HepG2 (cell line): ENCODE measurements at regions of chr18 and their contacts with region 1.

Region 1: DNA sequence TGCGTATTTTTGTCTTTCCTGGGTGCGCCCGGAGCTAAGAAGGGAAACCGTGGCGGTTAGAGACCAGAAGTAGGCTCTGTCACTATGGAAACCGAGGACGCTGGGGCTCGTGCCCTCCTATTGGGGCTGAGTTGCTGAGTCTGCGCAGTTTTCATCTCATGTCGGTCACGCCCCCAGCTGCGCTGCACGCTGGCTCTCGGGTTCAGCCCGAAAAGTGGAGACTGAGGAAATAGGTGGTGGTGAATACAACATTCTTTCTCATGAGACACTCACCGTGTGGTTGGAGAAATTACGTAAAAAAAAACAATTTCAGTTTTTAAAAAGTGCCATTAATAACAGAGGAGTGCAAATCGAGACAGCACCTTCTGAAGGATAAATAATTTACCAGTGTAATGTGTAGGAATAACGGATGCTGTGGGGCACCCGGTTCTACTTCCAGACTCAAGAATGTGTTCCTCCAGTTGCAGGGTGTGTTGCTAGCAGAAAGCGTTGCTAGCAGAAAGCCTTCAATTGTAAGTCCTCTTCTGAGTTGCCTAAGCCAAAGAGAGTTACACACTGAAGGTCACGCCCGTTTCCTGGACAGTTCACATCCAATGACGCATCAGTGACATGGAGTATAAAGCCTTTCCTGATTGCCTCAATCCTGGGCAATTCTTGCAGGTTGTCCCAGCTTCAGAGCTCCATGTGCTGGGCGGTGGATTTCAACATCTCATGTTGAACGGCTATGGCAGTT is 20.4 kb upstream of the CXXC1 start:
- DNase-seq: peak; percentile 85
- ATAC-seq: peak; percentile 98
- H3K4me3 ChIP-seq: peak overlapping the region; percentile 46 to 75 (median 71)
- H3K27ac ChIP-seq: no peak overlapping the region
- H3K4me1 ChIP-seq: peaks cover 37% of the 10 kb centered on the region
- H3K27me3 ChIP-seq: no peaks in the 10 kb centered on the region
- CTCF ChIP-seq: no peak
- EP300 ChIP-seq: no peak
- POLR2A ChIP-seq: no peak
- RAD21 ChIP-seq: no peak

Region 2: DNA sequence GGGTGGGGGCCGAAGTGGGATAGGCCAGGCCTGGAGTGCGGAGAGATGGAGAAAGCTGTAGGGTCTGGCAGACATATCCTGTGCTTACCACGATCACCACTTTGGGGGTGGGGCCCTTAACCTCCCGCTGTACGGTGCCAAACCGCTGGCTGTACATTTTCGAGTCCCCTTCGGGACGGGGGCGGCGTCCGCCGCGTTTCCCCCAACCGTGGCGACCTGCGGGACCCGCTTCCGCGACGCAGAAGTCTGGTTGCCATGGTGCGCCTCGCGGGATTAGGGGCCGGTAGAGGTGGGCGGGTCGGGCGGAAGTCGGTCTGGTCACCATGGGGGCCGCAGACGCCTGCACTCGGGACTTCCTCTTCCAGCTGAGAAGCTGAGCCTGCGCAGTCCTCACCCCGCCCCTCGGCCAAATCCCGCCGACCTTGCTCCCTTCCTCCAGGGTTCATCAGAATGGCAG is 41.6 kb before region 1 on chr18 and contains the start of gene CFAP53:
- CTCF ChIA-PET with region 1: no interaction called
- POLR2A ChIA-PET with region 1: no interaction called
- in situ Hi-C with region 1: no loop called
- intact Hi-C with region 1: loop called (anchors 2 kb)
- DNase-seq: peak; percentile 81
- ATAC-seq: peak; percentile 99
- H3K4me3 ChIP-seq: peak within 1 kb of the TSS; percentile 74 to 85 (median 78)
- H3K27ac ChIP-seq: no peak within 1 kb of the TSS
- H3K4me1 ChIP-seq: peaks cover 13% of the 10 kb centered on the region
- H3K27me3 ChIP-seq: no peaks in the 10 kb centered on the region; a peak in 1 of 5 replicates
- CTCF ChIP-seq: no peak
- EP300 ChIP-seq: no peak
- POLR2A ChIP-seq: peak in 1 of 2 experiments; percentile 29; a peak in 2 of 4 replicates
- RAD21 ChIP-seq: 0 out of 2 replicates have a peak, but pooled peaks have one; percentile 13
- total RNA-seq, gene CFAP53: 0.07 TPM in 1 of 2 replicates, not detected in the other

Region 3: GRCh38 chr18:50281295-50281971 is 26.5 kb before region 1 on chr18 and contains the start of gene MBD1:
- CTCF ChIA-PET with region 1: no interaction called
- POLR2A ChIA-PET with region 1: interaction called, 15 read pairs
- in situ Hi-C with region 1: no loop called
- intact Hi-C with region 1: no loop called
- DNase-seq: peak; percentile 93
- ATAC-seq: peak; percentile 96
- H3K4me3 ChIP-seq: peak within 1 kb of the TSS; percentile 83 to 100 (median 88)
- H3K27ac ChIP-seq: peak within 1 kb of the TSS; percentile 70
- H3K4me1 ChIP-seq: peaks cover 29% of the 10 kb centered on the region
- H3K27me3 ChIP-seq: no peaks in the 10 kb centered on the region; a peak in 1 of 5 replicates
- CTCF ChIP-seq: peak; percentile 66
- EP300 ChIP-seq: no peak
- POLR2A ChIP-seq: peak in 1 of 2 experiments; percentile 71; a peak in 2 of 4 replicates
- RAD21 ChIP-seq: 0 out of 2 replicates have a peak, but pooled peaks have one; percentile 16
- total RNA-seq, gene MBD1: 15.2 and 25.5 TPM in 2 replicates

Region 4: DNA sequence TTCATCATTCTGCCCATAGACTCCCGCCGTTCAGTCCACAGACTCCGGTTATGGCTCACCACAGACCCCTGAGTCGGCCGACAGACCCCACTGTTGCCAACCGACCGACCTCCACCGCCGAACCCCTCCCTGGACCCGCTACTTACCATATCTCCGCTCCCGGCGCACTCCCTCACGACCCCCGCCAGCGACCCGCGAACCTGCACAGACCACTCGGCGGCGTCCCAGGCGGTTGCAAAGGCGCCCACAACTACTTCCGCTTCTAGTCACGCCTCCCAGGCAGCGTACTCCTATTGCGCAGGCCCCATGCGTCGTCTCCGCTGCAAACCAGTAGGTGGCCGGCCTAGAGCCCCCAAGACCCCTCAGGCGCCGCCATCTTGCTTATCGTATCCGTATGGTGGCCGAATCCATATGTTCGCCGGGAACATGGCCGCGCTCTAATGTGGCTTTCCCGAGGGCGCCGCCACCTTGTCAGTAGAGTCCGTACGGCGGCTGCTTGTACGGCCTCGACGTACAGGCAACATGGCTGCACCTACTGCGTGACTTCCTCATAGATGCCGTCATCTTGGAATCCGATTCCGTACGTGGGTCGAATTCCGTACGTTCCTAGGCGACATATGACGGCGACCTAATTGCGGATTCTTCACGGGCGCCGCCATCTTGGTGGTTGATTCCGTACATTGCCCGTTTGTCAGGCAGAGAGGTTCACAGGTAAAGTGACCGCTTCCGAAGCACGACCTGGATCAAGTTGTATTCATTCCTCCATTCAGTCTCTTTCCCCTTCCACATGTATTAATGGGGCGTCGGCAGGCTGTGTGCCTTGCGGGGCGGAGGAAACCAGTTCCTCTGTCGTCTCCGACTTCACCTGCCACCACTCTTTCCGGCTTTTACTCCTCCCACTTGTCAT is 20.2 kb before region 1 on chr18 and contains the start of gene CXXC1:
- CTCF ChIA-PET with region 1: no interaction called
- POLR2A ChIA-PET with region 1: interaction called, 4 read pairs
- in situ Hi-C with region 1: no loop called
- intact Hi-C with region 1: loop called (anchors 2 kb)
- DNase-seq: peak; percentile 98
- ATAC-seq: peak; percentile 96
- H3K4me3 ChIP-seq: peak within 1 kb of the TSS; percentile 88 to 93 (median 90)
- H3K27ac ChIP-seq: peak within 1 kb of the TSS; percentile 59
- H3K4me1 ChIP-seq: peaks cover 16% of the 10 kb centered on the region
- H3K27me3 ChIP-seq: peaks cover 0 to 4% of the 10 kb centered on the region in 2 experiments; a peak in 2 of 5 replicates
- CTCF ChIP-seq: peak; percentile 78
- EP300 ChIP-seq: no peak; a peak in 1 of 4 replicates
- POLR2A ChIP-seq: peak in 1 of 2 experiments; percentile 41; a peak in 2 of 4 replicates
- RAD21 ChIP-seq: peak; percentile 29; the same call in 1 of the 2 replicates
- total RNA-seq, gene CXXC1: 29.8 and 32.9 TPM in 2 replicates

Region 5: DNA sequence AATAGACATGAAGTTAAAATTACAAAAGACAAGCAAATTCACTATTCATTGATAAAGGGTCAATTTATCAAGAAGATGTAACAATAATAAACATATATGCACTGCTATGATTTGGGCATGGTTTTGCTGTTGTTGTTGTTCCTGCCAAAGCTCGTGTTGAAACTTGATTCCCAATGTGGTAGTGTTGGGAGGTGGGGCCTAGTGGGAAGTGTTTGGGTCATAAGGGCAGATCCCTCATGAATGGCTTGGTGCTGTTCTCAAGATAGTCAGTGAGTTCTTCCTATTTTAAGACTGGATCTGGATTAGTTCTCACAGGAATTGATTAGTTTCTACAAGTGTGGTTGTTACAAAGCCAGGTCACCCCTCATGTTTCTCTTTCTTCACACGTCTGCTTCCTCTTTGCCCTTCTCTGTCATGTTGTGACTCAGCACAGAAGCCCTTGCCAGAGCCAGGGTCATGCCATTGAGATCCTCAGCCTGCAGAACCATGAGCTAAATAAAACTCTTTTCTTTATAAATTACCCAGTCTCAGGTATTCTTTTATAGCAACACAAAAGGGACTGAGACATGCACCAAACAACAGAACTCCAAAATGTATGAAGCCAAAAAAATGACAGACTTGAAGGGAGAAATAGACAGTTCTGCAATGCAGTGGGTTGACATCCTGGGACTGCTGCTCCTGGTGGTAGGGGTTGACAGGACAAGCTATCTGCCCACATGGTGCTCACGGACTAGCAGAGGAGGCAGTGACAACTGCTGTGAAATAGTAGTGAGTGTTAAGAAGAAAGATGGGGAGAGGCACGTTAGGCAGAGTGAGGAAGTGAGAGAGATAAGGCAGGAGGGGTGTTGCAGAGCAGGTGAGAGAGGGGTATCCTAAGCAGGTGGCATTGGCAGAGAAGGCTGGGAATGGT is 48.4 kb after region 1 on chr18:
- CTCF ChIA-PET with region 1: no interaction called
- POLR2A ChIA-PET with region 1: no interaction called
- in situ Hi-C with region 1: no loop called
- intact Hi-C with region 1: loop called (anchors 5 kb)
- DNase-seq: peak; percentile 11
- ATAC-seq: peak; percentile 97
- H3K4me3 ChIP-seq: no peak overlapping the region
- H3K27ac ChIP-seq: no peak overlapping the region
- H3K4me1 ChIP-seq: peaks cover 15% of the 10 kb centered on the region
- H3K27me3 ChIP-seq: peaks cover 2 to 4% of the 10 kb centered on the region in 2 experiments; a peak in 3 of 5 replicates
- CTCF ChIP-seq: peak; percentile 22
- EP300 ChIP-seq: no peak
- POLR2A ChIP-seq: no peak
- RAD21 ChIP-seq: no peak

Region 6: GRCh38 chr18:50374753-50375391 is 67.0 kb after region 1 on chr18 and contains the start of gene SKA1:
- CTCF ChIA-PET with region 1: no interaction called
- POLR2A ChIA-PET with region 1: interaction called, 10 read pairs
- in situ Hi-C with region 1: no loop called
- intact Hi-C with region 1: no loop called
- DNase-seq: peak; percentile 87
- ATAC-seq: peak; percentile 96
- H3K4me3 ChIP-seq: peak within 1 kb of the TSS; percentile 75 to 88 (median 86)
- H3K27ac ChIP-seq: peak within 1 kb of the TSS; percentile 82
- H3K4me1 ChIP-seq: peaks cover 25% of the 10 kb centered on the region
- H3K27me3 ChIP-seq: no peaks in the 10 kb centered on the region; a peak in 1 of 5 replicates
- CTCF ChIP-seq: no peak
- EP300 ChIP-seq: no peak; a peak in 1 of 4 replicates
- POLR2A ChIP-seq: peak; percentile 95 to 99
- RAD21 ChIP-seq: 0 out of 2 replicates have a peak, but pooled peaks have one; percentile 13
- total RNA-seq, gene SKA1: 21.3 and 28.3 TPM in 2 replicates